ENCODE measurements at regions of chr11 and their contacts with region 1.

Region 1: GRCh38 chr11:44775366-44775984 is 48.7 kb downstream of the TSPAN18 start:
- DNase-seq: peak; percentile 83
- H3K4me3 Mint-ChIP-seq: no peak overlapping the region
- H3K27ac Mint-ChIP-seq: no peak overlapping the region
- H3K4me1 Mint-ChIP-seq: no peaks in the 10 kb centered on the region
- H3K27me3 Mint-ChIP-seq: peaks cover 55% of the 10 kb centered on the region
- CTCF ChIP-seq: peak; percentile 80

Region 2: DNA sequence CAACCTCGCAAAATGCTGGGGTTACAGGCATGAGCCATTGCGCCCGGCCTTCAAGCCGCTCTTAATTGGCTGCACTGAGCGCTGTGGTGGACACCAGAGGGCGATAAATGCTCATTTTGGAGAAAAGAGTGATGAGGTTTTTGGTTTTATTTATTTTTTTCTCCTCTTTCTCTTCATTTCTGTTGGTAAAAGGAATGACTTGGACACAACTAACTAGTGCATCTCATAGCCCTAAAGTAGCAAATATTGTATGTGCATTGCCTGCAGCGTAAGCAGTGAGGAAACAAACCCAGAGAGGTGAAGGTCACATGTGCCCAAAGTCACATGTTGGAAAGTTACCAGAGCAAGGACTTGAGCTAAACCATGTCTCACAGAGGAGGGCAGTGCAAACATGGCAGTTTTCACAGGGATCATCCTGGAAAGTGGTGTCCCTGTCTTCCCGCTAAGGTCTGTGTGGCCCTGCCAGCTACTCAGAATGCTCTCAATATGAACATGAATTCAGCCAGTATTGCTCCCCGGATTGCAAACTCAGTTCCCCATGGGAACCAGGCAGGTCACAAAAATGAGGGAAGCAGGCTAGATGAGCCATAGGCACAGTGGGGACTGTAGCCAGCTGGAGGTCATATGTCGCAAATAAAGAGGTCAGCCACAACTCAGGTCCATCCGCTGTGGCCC is 218.6 kb before region 1 on chr11:
- CTCF ChIA-PET with region 1: no interaction called
- intact Hi-C with region 1: loop called (anchors 10 kb)
- DNase-seq: peak; percentile 70
- H3K4me3 Mint-ChIP-seq: no peak overlapping the region
- H3K27ac Mint-ChIP-seq: no peak overlapping the region
- H3K4me1 Mint-ChIP-seq: peaks cover 8% of the 10 kb centered on the region
- H3K27me3 Mint-ChIP-seq: peaks cover 21% of the 10 kb centered on the region
- CTCF ChIP-seq: peak; percentile 79

Region 3: DNA sequence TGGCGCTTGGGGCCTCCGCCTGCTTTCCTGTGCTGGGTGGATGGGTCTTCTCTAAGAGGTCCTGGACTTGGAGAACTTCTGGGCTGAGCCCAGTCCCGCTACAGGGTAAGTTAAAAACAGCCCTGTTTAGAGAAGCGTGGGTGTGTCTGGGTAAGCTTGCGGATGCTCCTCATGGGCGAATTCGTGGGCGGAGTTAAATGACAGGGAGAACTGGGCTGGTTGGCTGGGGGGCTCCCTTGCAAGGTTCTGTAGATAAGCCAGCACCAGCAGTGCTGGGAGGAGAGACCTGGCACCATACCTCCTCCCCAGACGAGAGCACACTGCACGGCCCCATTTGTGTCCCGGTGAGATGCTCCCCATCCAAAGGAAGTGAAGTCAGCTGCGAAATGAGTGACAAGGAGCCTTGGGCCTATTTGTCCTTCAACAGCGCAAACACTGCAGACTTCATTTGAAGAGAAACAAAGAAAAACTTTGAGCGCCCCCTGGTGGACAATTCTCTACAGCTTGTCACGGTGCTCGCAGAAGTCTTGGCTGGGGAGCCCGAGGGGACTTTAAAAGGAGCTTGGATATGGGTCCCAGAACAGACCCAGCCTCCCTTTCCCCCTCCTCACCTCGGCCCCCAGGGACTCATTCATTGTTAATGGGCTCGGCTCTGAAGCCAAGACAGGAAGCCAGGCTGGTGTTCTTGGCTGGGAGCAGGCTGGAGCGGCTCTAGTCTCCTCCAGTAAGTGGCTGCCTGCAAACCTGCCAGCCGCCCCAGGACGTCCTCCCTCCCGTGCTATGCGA is 135.7 kb after region 1 on chr11:
- CTCF ChIA-PET with region 1: no interaction called
- intact Hi-C with region 1: loop called (anchors 5 kb)
- DNase-seq: peak; percentile 90
- H3K4me3 Mint-ChIP-seq: no peak overlapping the region
- H3K27ac Mint-ChIP-seq: no peak overlapping the region
- H3K4me1 Mint-ChIP-seq: no peaks in the 10 kb centered on the region
- H3K27me3 Mint-ChIP-seq: peaks cover 73% of the 10 kb centered on the region
- CTCF ChIP-seq: peak; percentile 77

Measured in Calu3 (cell line).